ENCODE measurements at regions of chr4 and their contacts with region 1.

Region 1: GRCh38 chr4:76055016-76055415 is 19.1 kb upstream of the CXCL11 start:
- DNase-seq: no peak
- ATAC-seq: peak; percentile 96
- H3K4me3 Mint-ChIP-seq: no peak overlapping the region
- H3K27ac Mint-ChIP-seq: peak overlapping the region; percentile 81
- H3K4me1 Mint-ChIP-seq: peaks cover 34% of the 10 kb centered on the region
- H3K27me3 Mint-ChIP-seq: no peaks in the 10 kb centered on the region
- CTCF ChIP-seq: no peak

Region 2: DNA sequence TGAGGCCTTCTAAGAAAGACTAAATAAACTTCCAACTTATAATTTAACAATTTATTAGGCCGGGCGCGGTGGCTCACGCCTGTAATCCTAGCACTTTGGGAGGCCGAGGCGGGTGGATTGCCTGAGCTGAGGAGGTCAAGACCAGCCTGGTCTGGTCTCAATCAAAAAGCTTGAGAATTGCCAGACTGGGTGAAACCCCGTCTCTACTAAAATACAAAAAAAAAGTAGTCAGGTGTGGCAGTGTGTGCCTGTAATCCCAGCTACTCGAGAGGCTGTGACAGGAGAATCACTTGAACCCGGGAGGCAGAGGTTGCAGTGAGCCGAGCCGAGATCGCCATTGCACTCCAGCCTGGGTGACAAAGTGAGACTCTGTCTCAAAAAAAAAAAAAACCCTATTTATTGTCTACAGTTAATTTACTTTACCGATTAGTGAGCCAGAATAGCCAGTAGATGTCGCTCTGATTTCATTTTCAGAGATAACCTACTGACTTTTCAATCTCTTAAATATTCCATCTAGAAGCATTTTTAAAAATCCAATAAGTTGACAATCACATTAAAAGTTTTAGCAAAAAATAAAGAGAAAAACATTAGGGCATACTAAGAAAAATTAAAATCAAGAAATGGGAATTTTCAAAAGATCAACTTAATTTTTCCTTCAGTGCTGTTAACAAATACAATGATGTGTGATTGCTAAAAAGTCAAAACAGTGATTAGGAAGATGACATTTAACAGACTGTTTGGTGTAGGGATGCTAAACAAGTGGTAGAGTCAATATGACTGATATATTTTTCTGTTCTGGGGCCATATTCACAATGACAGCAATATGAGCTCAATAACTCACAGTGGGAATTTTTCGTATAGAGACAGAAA is 375.7 kb after region 1 on chr4:
- CTCF ChIA-PET with region 1: no interaction called
- POLR2A ChIA-PET with region 1: no interaction called
- intact Hi-C with region 1: no loop called
- DNase-seq: no peak
- ATAC-seq: peak; percentile 25
- H3K4me3 Mint-ChIP-seq: no peak overlapping the region
- H3K27ac Mint-ChIP-seq: no peak overlapping the region
- H3K4me1 Mint-ChIP-seq: peaks cover 13% of the 10 kb centered on the region
- H3K27me3 Mint-ChIP-seq: peaks cover 9% of the 10 kb centered on the region
- CTCF ChIP-seq: peak; percentile 62

Region 3: GRCh38 chr4:76836860-76837562 is 782.0 kb after region 1 on chr4:
- CTCF ChIA-PET with region 1: no interaction called
- POLR2A ChIA-PET with region 1: interaction called, 11 read pairs
- intact Hi-C with region 1: no loop called
- DNase-seq: no peak
- ATAC-seq: no peak
- H3K4me3 Mint-ChIP-seq: no peak overlapping the region
- H3K27ac Mint-ChIP-seq: no peak overlapping the region
- H3K4me1 Mint-ChIP-seq: no peaks in the 10 kb centered on the region
- H3K27me3 Mint-ChIP-seq: no peaks in the 10 kb centered on the region
- CTCF ChIP-seq: no peak

Measured in activated B cell treated with CpG ODN at 0.5 μM for 24 hours (primary cell).